ENCODE measurements at regions of chr2 and their contacts with region 1.

Region 1: GRCh38 chr2:233404222-233404621 is 49.9 kb downstream of the DGKD start:
- DNase-seq: peak; percentile 85
- H3K4me3 Mint-ChIP-seq: no peak overlapping the region
- H3K27ac Mint-ChIP-seq: peak overlapping the region; percentile 75
- H3K4me1 Mint-ChIP-seq: peaks cover 58% of the 10 kb centered on the region
- H3K27me3 Mint-ChIP-seq: no peaks in the 10 kb centered on the region

Region 2: GRCh38 chr2:233267516-233268245 is 136.5 kb before region 1 on chr2:
- CTCF ChIA-PET with region 1: interaction called, 3 read pairs
- intact Hi-C with region 1: loop called (anchors 5 kb)
- DNase-seq: peak; percentile 88
- H3K4me3 Mint-ChIP-seq: peak overlapping the region; percentile 64
- H3K27ac Mint-ChIP-seq: peak overlapping the region; percentile 95
- H3K4me1 Mint-ChIP-seq: peaks cover 55% of the 10 kb centered on the region
- H3K27me3 Mint-ChIP-seq: no peaks in the 10 kb centered on the region

Region 3: GRCh38 chr2:233379441-233379840 is 24.8 kb before region 1 on chr2:
- CTCF ChIA-PET with region 1: no interaction called
- intact Hi-C with region 1: no loop called
- DNase-seq: no peak
- H3K4me3 Mint-ChIP-seq: no peak overlapping the region
- H3K27ac Mint-ChIP-seq: no peak overlapping the region
- H3K4me1 Mint-ChIP-seq: peaks cover 54% of the 10 kb centered on the region
- H3K27me3 Mint-ChIP-seq: no peaks in the 10 kb centered on the region

Region 4: DNA sequence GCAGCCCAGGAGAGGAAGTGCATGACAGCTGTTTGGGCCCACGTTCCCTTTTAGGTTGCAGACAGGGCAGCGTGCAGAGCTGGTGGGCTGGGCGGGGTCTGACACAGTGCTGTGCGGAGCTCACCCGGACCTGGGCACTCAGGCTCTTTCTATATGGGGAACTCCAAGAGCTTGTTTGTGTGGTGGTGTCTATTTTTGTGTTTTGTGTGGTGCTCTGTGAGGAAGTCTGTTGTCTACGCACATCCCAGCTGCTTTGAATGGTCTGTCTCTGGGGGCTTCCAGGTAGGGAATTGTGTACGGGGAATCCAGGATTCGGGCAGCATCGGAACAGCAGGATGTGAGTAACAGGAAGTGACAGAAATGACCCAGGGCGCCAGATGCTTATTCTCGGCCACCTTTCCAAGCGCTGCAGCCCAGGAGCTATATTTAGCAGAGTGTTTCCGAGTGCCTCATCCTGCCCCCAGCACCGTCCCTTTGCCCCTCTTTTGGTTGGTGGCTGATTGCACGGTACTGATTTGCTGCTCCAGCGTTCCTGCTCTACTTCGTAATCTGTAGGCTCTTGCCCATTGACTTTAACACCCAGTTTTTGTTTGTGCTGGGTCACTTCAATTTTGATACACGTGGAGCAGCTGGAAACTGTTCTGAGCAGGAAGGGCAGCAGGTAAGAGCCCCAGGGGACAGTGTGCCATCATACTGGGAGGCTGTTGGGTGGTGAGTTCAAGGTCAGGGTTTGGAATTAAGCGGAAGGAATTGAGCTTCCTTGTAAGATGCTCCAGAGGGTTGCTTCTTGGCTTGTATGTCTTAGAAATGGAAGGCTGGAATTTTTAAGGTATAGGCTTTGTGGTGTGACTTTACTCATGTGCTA is 14.8 kb after region 1 on chr2:
- CTCF ChIA-PET with region 1: interaction called, 29 read pairs
- intact Hi-C with region 1: no loop called
- DNase-seq: peak; percentile 67
- H3K4me3 Mint-ChIP-seq: peak overlapping the region; percentile 67
- H3K27ac Mint-ChIP-seq: peak overlapping the region; percentile 88
- H3K4me1 Mint-ChIP-seq: peaks cover 97% of the 10 kb centered on the region
- H3K27me3 Mint-ChIP-seq: no peaks in the 10 kb centered on the region

Region 5: GRCh38 chr2:233443468-233444183 is 39.4 kb after region 1 on chr2:
- CTCF ChIA-PET with region 1: interaction called, 207 read pairs
- intact Hi-C with region 1: loop called (anchors 1 kb)
- DNase-seq: peak; percentile 91
- H3K4me3 Mint-ChIP-seq: no peak overlapping the region
- H3K27ac Mint-ChIP-seq: peak overlapping the region; percentile 30
- H3K4me1 Mint-ChIP-seq: peaks cover 16% of the 10 kb centered on the region
- H3K27me3 Mint-ChIP-seq: no peaks in the 10 kb centered on the region

Region 6: GRCh38 chr2:233556756-233557736 is 152.8 kb after region 1 on chr2:
- CTCF ChIA-PET with region 1: no interaction called
- intact Hi-C with region 1: no loop called
- DNase-seq: peak; percentile 14
- H3K4me3 Mint-ChIP-seq: no peak overlapping the region
- H3K27ac Mint-ChIP-seq: peak overlapping the region; percentile 58
- H3K4me1 Mint-ChIP-seq: peaks cover 11% of the 10 kb centered on the region
- H3K27me3 Mint-ChIP-seq: no peaks in the 10 kb centered on the region

Region 7: DNA sequence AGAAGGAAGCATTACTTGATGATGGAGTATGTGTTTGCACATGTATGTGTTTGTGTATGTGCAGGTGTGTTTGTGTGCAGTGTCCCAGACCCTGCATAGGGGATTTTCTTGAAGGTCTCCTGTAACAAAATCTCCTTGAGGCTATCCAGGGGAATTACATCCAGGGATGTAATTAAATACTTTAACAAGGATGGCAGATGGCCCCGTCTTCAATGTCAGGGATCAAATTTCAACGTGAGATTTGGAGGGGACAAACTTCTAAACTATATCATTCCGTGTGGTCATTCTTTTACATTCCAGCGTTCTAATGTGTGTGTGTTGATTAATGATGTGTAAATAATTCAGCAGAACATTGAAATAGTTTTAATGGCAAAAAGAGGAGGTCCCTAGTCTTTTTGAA is 270.8 kb after region 1 on chr2:
- CTCF ChIA-PET with region 1: no interaction called
- intact Hi-C with region 1: no loop called
- DNase-seq: no peak
- H3K4me3 Mint-ChIP-seq: no peak overlapping the region
- H3K27ac Mint-ChIP-seq: no peak overlapping the region
- H3K4me1 Mint-ChIP-seq: no peaks in the 10 kb centered on the region
- H3K27me3 Mint-ChIP-seq: peaks cover 11% of the 10 kb centered on the region

Region 8: DNA sequence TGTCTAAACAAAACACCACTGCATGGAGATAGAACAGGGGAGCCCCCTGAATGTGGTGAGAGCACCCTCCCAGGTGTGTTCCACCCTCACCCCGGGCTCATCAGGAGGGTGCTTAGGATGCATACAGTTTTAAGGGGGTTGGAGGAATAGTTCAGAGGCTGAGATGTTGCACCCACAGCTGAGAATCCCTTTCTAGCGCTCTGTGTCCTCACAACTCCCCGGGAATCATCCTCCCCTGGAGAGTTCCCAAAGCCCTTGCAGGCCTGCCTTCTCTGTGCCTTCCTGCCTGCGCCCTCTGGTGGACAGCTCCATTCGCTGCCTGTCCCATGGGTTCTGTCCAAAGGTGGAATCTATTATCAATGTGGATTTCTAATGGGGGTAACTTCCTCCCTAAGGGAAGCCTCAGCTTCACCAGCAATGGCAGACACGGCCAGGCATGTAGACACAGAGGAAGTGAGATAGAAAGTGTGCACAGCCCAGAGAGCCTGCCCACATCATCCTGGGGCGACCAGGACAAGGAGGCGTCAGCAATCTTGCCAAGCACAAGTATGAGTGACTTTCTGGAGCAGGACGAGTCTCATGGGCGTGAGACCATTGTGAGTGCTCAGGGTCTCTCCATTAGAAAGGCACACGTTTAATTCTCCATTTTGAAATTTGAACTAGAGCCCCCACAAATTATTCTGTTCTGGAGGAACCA is 307.2 kb after region 1 on chr2:
- CTCF ChIA-PET with region 1: no interaction called
- intact Hi-C with region 1: loop called (anchors 1 kb)
- DNase-seq: peak; percentile 82
- H3K4me3 Mint-ChIP-seq: no peak overlapping the region
- H3K27ac Mint-ChIP-seq: no peak overlapping the region
- H3K4me1 Mint-ChIP-seq: no peaks in the 10 kb centered on the region
- H3K27me3 Mint-ChIP-seq: peaks cover 11% of the 10 kb centered on the region

Measured in activated naive CD4-positive, alpha-beta T cell treated with anti-CD3 and anti-CD28 coated beads for 36 hours (primary cell).